ENCODE measurements at regions of chr15 and their contacts with region 1.

Region 1: DNA sequence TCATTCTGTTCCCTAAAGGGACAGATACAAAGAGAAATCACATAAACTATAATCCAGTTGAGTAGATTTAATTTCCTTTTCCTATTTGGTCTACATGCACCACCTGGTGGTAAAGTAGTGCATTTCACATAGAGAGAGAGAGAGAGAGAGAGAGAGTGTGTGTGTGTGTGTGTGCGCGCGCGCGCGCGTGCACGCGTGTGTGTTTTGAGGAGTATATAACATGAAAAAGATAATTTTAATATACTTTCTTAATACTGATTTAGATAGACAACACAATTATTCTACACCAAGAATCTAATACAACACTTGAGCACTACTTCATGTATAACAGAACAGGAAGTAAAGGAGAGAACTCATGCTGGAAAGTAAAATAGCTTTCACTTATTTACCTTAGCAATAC is 1.1 kb upstream of the FGF7 start:
- DNase-seq: peak; percentile 68
- ATAC-seq: peak; percentile 53
- H3K4me3 ChIP-seq: no peak overlapping the region
- H3K27ac ChIP-seq: no peak overlapping the region
- H3K4me1 ChIP-seq: no peaks in the 10 kb centered on the region
- H3K27me3 ChIP-seq: no peaks in the 10 kb centered on the region
- CTCF ChIP-seq: peak; percentile 79

Region 2: DNA sequence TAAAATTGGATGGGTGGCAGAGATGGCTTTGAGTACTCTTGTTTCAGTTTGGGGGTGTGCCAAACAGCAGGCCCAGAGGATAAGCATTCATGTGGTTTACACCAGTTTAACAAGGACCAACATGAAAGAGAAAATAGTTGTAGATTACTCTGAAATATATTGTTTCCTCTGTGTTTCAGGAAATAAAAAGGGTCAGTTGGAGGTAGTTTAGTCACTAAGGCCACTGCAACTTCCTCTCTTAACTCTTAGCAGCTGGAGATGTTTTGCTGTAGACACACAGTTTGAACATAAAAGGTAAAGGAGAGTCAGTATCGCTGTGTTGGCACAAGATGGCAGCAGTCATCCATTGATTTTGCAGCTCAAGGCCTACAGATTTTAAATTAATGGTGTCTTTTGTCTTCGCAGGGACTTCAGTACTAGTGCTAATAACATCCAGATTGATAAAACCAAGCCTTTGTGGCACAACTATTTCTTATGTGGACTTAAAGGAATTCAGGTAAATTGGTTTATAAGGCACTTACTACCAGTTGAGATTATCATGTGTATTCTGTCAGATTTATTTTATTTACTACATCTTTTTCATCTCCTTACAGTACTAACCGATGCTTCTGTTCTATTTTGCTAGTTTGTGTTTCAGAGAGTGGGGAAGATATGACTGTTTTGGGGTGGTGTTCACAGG is 186.4 kb before region 1 on chr15:
- CTCF ChIA-PET with region 1: interaction called, 3 read pairs
- POLR2A ChIA-PET with region 1: no interaction called
- intact Hi-C with region 1: loop called (anchors 1 kb)
- DNase-seq: peak; percentile 60
- ATAC-seq: peak; percentile 88
- H3K4me3 ChIP-seq: no peak overlapping the region
- H3K27ac ChIP-seq: 0 out of 2 replicates have a peak overlapping the region, but pooled peaks have one; percentile 10
- H3K4me1 ChIP-seq: peaks cover 5% of the 10 kb centered on the region; the same call in 1 of the 2 replicates
- H3K27me3 ChIP-seq: no peaks in the 10 kb centered on the region
- CTCF ChIP-seq: peak; percentile 81

Region 3: DNA sequence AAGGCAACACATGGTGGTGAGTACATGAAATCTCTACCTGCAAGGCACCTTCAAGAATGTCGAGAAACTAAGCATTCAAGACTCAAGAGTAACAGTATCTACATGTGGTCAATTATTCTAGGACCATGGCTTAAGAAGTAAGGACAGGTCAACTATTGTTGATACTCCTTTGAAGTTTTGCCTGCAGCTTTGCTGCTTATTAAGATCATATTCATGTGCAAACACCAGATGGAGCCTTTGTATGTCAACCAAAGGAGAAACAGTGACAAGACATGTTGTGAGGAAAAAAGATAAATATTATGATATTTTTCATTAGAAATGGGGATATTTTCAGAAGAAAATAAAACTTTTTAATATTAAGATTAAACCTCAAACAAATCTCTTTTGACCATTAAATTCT is 51.2 kb before region 1 on chr15:
- CTCF ChIA-PET with region 1: no interaction called
- POLR2A ChIA-PET with region 1: no interaction called
- intact Hi-C with region 1: loop called (anchors 1 kb)
- DNase-seq: peak; percentile 52
- ATAC-seq: peak; percentile 27; the same call in 1 of the 2 replicates
- H3K4me3 ChIP-seq: no peak overlapping the region
- H3K27ac ChIP-seq: no peak overlapping the region
- H3K4me1 ChIP-seq: no peaks in the 10 kb centered on the region
- H3K27me3 ChIP-seq: no peaks in the 10 kb centered on the region
- CTCF ChIP-seq: peak; percentile 58